ENCODE measurements at regions of chr1 and their contacts with region 1.

Region 1: DNA sequence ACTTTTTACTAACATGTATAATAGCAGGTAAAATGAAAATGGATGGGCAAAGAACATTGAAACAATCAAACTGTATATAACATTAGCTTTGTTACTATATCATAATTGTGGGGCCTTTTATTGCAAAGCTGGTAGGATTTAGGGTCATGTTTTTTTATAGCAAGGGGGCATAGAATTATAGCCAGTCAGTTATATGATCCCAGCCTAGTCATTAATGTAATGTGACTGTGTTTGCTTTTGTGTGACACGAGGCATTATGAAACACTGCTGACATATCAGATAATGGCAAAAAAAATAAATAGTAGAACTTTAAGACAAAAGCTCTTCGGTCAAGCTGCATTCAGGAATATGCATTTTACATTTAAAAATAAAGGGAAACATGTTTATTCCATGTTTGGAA is 81.3 kb upstream of the ZNF281 start:
- DNase-seq: no peak
- ATAC-seq: no peak
- H3K4me3 Mint-ChIP-seq: no peak overlapping the region
- H3K27ac Mint-ChIP-seq: no peak overlapping the region
- H3K4me1 Mint-ChIP-seq: no peaks in the 10 kb centered on the region
- H3K27me3 Mint-ChIP-seq: peaks cover 25% of the 10 kb centered on the region

Region 2: GRCh38 chr1:200118779-200119505 is 372.2 kb before region 1 on chr1:
- CTCF ChIA-PET with region 1: no interaction called
- POLR2A ChIA-PET with region 1: no interaction called
- DNase-seq: no peak
- ATAC-seq: no peak
- H3K4me3 Mint-ChIP-seq: no peak overlapping the region
- H3K27ac Mint-ChIP-seq: no peak overlapping the region
- H3K4me1 Mint-ChIP-seq: no peaks in the 10 kb centered on the region
- H3K27me3 Mint-ChIP-seq: peaks cover 21% of the 10 kb centered on the region

Region 3: GRCh38 chr1:200279810-200280411 is 211.2 kb before region 1 on chr1:
- CTCF ChIA-PET with region 1: interaction called, 13 read pairs
- POLR2A ChIA-PET with region 1: no interaction called
- DNase-seq: peak; percentile 40
- ATAC-seq: no peak
- H3K4me3 Mint-ChIP-seq: no peak overlapping the region
- H3K27ac Mint-ChIP-seq: no peak overlapping the region
- H3K4me1 Mint-ChIP-seq: no peaks in the 10 kb centered on the region
- H3K27me3 Mint-ChIP-seq: no peaks in the 10 kb centered on the region

Region 4: GRCh38 chr1:200405260-200405659 is 85.8 kb before region 1 on chr1:
- CTCF ChIA-PET with region 1: no interaction called
- POLR2A ChIA-PET with region 1: no interaction called
- DNase-seq: no peak
- ATAC-seq: no peak
- H3K4me3 Mint-ChIP-seq: no peak overlapping the region
- H3K27ac Mint-ChIP-seq: no peak overlapping the region
- H3K4me1 Mint-ChIP-seq: peaks cover 43% of the 10 kb centered on the region
- H3K27me3 Mint-ChIP-seq: no peaks in the 10 kb centered on the region